ENCODE measurements at regions of chr17 and their contacts with region 1.

Region 1: GRCh38 chr17:19460700-19461099 is 49.7 kb downstream of the RNF112 start:
- DNase-seq: peak; percentile 91

Region 2: GRCh38 chr17:19424934-19425868 is 35.5 kb before region 1 on chr17:
- intact Hi-C with region 1: no loop called
- DNase-seq: no peak

Region 3: GRCh38 chr17:19447085-19447583 is 13.6 kb before region 1 on chr17:
- intact Hi-C with region 1: no loop called
- DNase-seq: no peak

Region 4: GRCh38 chr17:19507775-19508576 is 47.3 kb after region 1 on chr17:
- intact Hi-C with region 1: loop called in 1 of 2 experiments (anchors 1 kb)
- DNase-seq: peak; percentile 92

Region 5: GRCh38 chr17:19979917-19980770 is 519.4 kb after region 1 on chr17:
- intact Hi-C with region 1: no loop called
- DNase-seq: peak; percentile 87

Measured in posterior vena cava (tissue), 2 donors.